ENCODE measurements at regions of chr10 and their contacts with region 1.

Region 1: GRCh38 chr10:44974628-44975431 is 3.8 kb downstream of the DEPP1 start:
- DNase-seq: peak in 13 of 14 experiments; percentile 30 to 83 (median 60)
- ATAC-seq: peak; percentile 94
- H3K4me3 ChIP-seq: peak overlapping the region; percentile 55
- H3K4me3 Mint-ChIP-seq: peak overlapping the region; percentile 44
- H3K27ac ChIP-seq: no peak overlapping the region
- H3K27ac Mint-ChIP-seq: no peak overlapping the region
- H3K4me1 ChIP-seq: peaks cover 33% of the 10 kb centered on the region
- H3K4me1 Mint-ChIP-seq: peaks cover 4% of the 10 kb centered on the region
- H3K27me3 ChIP-seq: no peaks in the 10 kb centered on the region
- H3K27me3 Mint-ChIP-seq: no peaks in the 10 kb centered on the region
- CTCF ChIP-seq: peak; percentile 89

Region 2: DNA sequence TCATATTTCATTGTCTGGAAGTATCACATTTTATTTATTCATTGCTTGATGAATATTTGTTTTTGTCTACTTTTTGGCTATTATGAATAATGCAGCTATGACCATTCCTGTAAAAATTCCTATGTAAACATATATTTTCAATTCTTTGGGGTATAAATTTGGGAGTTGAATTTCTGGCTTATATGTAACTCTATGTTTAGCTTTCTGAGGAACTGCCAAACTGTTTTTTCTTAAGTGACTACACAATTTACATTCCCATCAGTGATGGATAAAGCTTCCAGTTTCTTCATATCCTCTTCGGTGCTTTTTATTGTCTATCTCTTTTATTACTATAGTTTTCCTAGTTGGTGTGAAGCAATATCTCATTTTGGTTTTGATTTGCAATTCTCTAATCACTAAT is 474.4 kb before region 1 on chr10:
- CTCF ChIA-PET with region 1: no interaction called
- POLR2A ChIA-PET with region 1: no interaction called
- intact Hi-C with region 1: no loop called
- DNase-seq: no peak
- ATAC-seq: no peak
- H3K4me3 ChIP-seq: no peak overlapping the region
- H3K4me3 Mint-ChIP-seq: no peak overlapping the region
- H3K27ac ChIP-seq: no peak overlapping the region
- H3K27ac Mint-ChIP-seq: no peak overlapping the region
- H3K4me1 ChIP-seq: no peaks in the 10 kb centered on the region
- H3K4me1 Mint-ChIP-seq: no peaks in the 10 kb centered on the region
- H3K27me3 ChIP-seq: no peaks in the 10 kb centered on the region
- H3K27me3 Mint-ChIP-seq: no peaks in the 10 kb centered on the region
- CTCF ChIP-seq: no peak

Region 3: DNA sequence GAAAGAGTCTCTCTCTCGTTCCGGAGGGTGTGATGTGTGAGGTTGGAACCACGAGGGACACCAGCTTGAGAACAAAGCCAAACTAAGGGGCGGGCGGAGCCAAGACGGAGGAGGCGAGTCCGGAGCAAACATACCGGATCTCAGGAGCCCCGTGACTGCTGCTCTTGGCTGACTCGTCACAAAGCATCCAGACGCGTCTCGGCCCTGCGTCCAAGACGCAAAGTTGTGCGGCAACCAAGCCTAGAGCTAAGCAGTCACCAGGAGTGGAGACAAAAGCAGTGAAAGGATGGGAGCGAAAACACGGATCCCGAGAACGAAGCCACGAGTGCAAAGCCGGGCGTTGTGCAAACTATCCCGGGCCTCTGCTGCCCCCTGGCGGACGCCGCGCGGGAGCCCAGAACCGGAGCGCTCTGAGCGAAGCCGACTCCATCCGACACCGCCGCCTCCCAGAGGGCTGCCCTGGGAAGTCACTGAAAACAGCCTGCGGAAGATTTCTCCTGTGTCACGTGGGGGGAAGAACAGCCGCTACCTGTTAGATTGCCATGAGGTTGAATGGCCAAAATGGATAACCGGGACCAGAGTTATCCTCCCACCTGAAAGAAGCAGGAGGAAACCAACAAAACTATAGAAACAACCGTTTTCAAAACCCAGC is 110.1 kb before region 1 on chr10:
- CTCF ChIA-PET with region 1: no interaction called
- POLR2A ChIA-PET with region 1: no interaction called
- intact Hi-C with region 1: loop called in 1 of 2 experiments (anchors 5 kb)
- DNase-seq: peak; percentile 60 to 90 (median 80)
- ATAC-seq: peak; percentile 73
- H3K4me3 ChIP-seq: peak overlapping the region; percentile 55
- H3K4me3 Mint-ChIP-seq: peak overlapping the region; percentile 87
- H3K27ac ChIP-seq: no peak overlapping the region
- H3K27ac Mint-ChIP-seq: no peak overlapping the region
- H3K4me1 ChIP-seq: peaks cover 17% of the 10 kb centered on the region
- H3K4me1 Mint-ChIP-seq: peaks cover 21% of the 10 kb centered on the region
- H3K27me3 ChIP-seq: peaks cover 22 to 30% of the 10 kb centered on the region in 2 experiments
- H3K27me3 Mint-ChIP-seq: peaks cover 70% of the 10 kb centered on the region
- CTCF ChIP-seq: peak; percentile 90

Region 4: DNA sequence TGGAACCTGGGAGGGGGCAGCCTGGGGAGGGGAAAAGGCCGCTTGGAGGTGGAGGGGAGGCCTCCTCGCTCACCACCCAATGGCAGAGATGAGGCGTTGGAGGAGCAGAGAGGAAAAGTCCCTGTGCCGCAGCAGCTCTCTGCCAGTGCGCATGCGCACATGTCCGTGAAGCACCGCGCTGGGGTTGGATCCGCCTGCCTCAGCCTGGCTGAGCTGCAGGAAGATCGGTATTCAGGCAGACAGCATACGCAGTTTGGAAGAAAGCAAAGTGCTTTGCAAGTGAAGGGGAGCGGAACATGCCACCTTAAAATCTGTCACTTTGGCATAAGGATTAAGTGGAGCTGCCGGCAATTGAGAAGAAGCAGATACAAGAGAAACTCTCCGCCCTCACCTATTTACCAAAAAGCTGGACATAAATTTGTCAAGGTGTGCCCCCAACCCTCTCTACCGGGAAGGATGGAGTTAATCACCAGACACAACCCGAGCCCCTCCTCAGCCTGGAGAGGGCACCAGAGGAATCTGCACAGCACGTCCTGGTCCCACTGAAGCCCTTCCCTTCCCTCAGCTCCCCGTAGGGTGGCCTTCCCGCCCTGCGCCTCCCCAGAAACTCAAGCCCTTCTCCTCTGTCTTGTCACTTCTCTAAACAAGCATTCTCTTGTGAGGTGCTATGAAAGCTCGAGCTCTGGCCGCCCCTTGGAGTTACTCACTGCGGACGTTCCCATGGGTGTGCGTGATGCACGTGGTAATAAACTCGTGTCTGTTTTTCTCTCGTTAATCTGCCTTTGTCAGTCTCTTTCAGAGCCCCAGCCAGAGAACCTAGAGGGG is 95.9 kb before region 1 on chr10:
- CTCF ChIA-PET with region 1: no interaction called
- POLR2A ChIA-PET with region 1: no interaction called
- intact Hi-C with region 1: loop called in 1 of 2 experiments (anchors 5 kb)
- DNase-seq: peak; percentile 49 to 91 (median 72)
- ATAC-seq: peak; percentile 91
- H3K4me3 ChIP-seq: peak overlapping the region; percentile 53
- H3K4me3 Mint-ChIP-seq: peak overlapping the region; percentile 88
- H3K27ac ChIP-seq: no peak overlapping the region
- H3K27ac Mint-ChIP-seq: peak overlapping the region; percentile 71
- H3K4me1 ChIP-seq: peaks cover 10% of the 10 kb centered on the region
- H3K4me1 Mint-ChIP-seq: peaks cover 6% of the 10 kb centered on the region
- H3K27me3 ChIP-seq: peaks cover 0 to 5% of the 10 kb centered on the region in 2 experiments
- H3K27me3 Mint-ChIP-seq: peaks cover 16% of the 10 kb centered on the region
- CTCF ChIP-seq: no peak

Region 5: DNA sequence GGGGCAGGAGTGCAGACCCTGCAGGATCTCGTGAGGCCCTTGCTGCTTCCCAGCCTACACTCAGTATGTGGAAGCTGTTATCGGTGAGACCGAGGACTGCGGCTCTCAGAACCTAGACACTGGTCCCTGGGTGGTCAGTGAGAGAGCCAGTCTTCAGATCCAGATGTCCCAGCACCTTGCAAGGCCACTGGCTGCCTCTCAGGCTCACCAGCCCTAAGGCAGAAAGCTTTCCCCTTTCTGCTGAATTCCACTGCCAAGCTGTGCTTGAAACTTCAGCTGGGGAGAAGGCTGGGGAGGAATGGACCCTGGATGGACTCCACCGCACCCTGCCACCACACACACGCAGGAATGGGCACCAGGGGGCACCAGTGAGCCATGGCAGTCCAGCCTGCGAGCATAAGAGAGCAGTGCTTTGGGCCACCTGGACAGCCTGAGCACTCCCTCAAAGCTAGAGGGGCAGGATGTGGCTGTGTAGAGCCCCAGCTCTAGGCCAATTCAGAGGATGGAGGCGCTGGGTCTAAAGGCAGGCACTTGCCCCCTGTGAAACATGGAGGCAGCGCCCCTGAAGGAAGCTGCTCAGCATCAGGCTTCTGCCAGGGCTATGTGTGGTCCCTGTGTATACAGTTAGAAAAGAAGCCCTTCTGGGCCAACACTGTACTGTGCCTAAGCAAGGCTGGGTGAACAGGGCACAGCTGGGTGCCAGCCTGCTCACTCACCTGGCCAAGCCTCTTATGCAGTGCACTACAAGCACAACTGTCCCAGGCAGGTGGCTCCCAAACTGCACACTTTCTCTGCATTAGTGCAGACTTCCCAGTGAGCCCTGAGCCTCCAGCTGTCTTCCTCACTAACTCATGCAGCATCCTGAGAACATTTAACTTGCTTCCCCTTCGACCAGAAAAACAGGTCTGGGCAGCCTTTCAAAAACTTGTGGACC is 42.0 kb before region 1 on chr10:
- CTCF ChIA-PET with region 1: interaction called, 9 read pairs
- POLR2A ChIA-PET with region 1: no interaction called
- intact Hi-C with region 1: loop called (anchors 1 kb)
- DNase-seq: peak; percentile 62 to 90 (median 78)
- ATAC-seq: peak; percentile 74
- H3K4me3 ChIP-seq: no peak overlapping the region
- H3K4me3 Mint-ChIP-seq: no peak overlapping the region
- H3K27ac ChIP-seq: no peak overlapping the region
- H3K27ac Mint-ChIP-seq: no peak overlapping the region
- H3K4me1 ChIP-seq: peaks cover 17% of the 10 kb centered on the region
- H3K4me1 Mint-ChIP-seq: peaks cover 5% of the 10 kb centered on the region
- H3K27me3 ChIP-seq: no peaks in the 10 kb centered on the region
- H3K27me3 Mint-ChIP-seq: no peaks in the 10 kb centered on the region
- CTCF ChIP-seq: peak; percentile 85

Region 6: GRCh38 chr10:44959247-44960087 is 15.4 kb before region 1 on chr10 and contains the start of gene RASSF4:
- CTCF ChIA-PET with region 1: no interaction called
- POLR2A ChIA-PET with region 1: interaction called, 3 read pairs
- intact Hi-C with region 1: loop called in 1 of 2 experiments (anchors 1 kb)
- DNase-seq: peak; percentile 83 to 96 (median 92)
- ATAC-seq: peak; percentile 100
- H3K4me3 ChIP-seq: peak within 1 kb of the TSS; percentile 81
- H3K4me3 Mint-ChIP-seq: peak within 1 kb of the TSS; percentile 93
- H3K27ac ChIP-seq: peak within 1 kb of the TSS in 1 of 2 donors; percentile 29
- H3K27ac Mint-ChIP-seq: peak within 1 kb of the TSS; percentile 79
- H3K4me1 ChIP-seq: peaks cover 26% of the 10 kb centered on the region
- H3K4me1 Mint-ChIP-seq: peaks cover 30% of the 10 kb centered on the region
- H3K27me3 ChIP-seq: no peaks in the 10 kb centered on the region
- H3K27me3 Mint-ChIP-seq: no peaks in the 10 kb centered on the region
- CTCF ChIP-seq: no peak
- total RNA-seq, gene RASSF4: 0.88 to 1.4 TPM

Measured in CD4-positive, alpha-beta T cell (primary cell).